ENCODE measurements at regions of chr19 and their contacts with region 1.

Region 1: GRCh38 chr19:58305065-58305931 is at the start of gene ERVK3-1:
- DNase-seq: peak; percentile 93 to 97 (median 95)
- H3K4me3 ChIP-seq: peak within 1 kb of the TSS; percentile 54 to 83
- H3K4me3 Mint-ChIP-seq: peak within 1 kb of the TSS; percentile 97 to 100 (median 100)
- H3K27ac ChIP-seq: peak within 1 kb of the TSS; percentile 95
- H3K27ac Mint-ChIP-seq: peak within 1 kb of the TSS; percentile 97 to 100 (median 99)
- H3K4me1 ChIP-seq: peaks cover 31% of the 10 kb centered on the region
- H3K4me1 Mint-ChIP-seq: peaks cover 34 to 59% (median 45%) of the 10 kb centered on the region in 4 donors
- H3K27me3 ChIP-seq: no peaks in the 10 kb centered on the region
- H3K27me3 Mint-ChIP-seq: no peaks in the 10 kb centered on the region
- total RNA-seq, gene ERVK3-1: 72.3 to 76.6 TPM

Region 2: DNA sequence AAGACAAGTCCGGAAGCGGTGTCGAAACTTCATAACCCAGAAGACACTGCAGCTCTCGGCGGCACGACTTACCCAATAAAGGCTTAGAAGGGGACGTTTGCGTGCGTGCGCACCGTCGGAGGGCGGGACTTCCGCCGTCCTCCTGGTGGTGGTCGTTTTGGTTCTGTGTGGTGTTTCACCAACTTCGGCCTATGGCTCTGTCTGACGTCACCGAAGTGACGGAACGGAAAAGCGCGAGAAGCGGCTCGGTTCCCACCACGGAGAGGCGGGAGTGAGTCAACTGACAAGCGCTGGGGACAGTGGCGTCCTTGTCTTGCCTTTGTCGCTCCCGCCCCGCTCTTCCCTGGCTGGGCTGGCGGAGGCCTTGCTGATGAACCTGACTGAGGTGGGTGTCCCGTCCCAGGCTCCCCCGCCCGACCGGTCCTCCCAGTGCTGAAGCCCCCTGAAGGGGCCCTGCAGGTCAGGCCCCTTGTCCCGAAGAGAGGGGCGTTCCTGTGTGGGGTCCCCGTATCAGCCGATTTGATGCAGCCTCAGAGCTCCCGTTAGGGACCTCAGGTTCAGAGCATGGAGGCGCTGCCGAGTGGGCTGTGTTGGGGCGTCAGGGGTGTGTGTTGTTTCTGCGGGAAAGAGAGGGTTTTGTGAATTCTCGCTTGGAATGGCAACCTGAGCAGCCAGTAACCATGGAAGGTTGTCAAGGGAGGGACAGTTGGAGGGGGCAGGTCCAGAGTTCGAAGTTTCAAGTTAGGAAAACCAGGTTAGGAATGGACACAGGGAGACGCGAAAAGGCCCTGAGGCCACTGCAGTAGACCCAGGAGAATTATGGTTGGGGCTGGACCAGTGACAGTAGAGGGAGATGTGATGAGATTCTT is 915.3 kb before region 1 on chr19 and contains the start of gene ZNF548:
- CTCF ChIA-PET with region 1: no interaction called
- POLR2A ChIA-PET with region 1: no interaction called
- intact Hi-C with region 1: loop called (anchors 1 kb)
- DNase-seq: peak; percentile 93 to 100 (median 95)
- H3K4me3 ChIP-seq: peak within 1 kb of the TSS; percentile 52 to 62
- H3K4me3 Mint-ChIP-seq: peak within 1 kb of the TSS; percentile 97 to 99 (median 98)
- H3K27ac ChIP-seq: peak within 1 kb of the TSS; percentile 95
- H3K27ac Mint-ChIP-seq: peak within 1 kb of the TSS; percentile 98 to 100 (median 99)
- H3K4me1 ChIP-seq: peaks cover 22% of the 10 kb centered on the region
- H3K4me1 Mint-ChIP-seq: peaks cover 22 to 41% (median 31%) of the 10 kb centered on the region in 4 donors
- H3K27me3 ChIP-seq: no peaks in the 10 kb centered on the region
- H3K27me3 Mint-ChIP-seq: peaks cover 0 to 3% of the 10 kb centered on the region in 2 donors
- total RNA-seq, gene ZNF548: 85.4 to 103 TPM

Region 3: DNA sequence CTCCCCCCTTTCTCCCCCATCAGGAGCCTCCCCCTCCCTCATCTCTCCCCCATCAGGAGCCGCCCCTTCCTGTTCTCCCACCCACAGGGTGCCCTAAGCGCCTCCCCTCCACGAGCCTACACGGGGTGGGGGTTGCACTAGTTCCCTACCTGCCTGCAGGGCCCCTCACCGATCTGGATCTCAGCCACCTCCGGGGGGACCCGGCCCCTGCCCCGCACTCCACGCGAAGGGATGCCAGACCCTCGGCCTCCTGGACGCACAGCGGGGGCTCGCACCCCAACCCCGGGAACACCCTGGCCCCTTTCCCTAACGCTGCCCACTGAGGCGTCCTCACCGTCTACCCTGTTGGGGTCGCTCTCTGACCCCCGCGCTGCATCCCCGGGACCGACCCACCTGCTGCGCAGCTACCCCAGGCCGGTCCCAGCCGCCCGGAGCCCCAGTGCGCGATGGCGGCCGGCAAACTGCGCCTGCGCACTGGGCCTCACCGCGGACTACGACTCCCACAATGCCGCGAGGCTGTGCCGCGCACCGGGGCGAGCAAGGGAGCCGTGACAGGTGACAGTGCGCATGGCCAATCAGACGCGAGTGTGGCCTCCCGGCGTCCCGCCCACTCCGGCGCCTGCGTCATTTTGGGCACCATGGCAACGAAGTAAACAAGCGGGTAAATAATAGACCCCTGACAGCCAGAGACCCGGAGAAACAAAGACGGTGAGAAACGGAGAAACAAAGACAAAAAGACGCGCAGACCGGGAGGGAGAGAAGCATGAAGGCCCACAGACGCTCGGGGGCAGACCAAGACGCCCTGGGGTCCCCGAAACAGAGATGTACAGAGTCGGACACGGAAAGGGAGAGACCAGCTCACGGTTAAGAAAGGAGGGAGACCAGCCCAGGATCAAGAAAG is 207.3 kb before region 1 on chr19 and contains the start of gene ZSCAN18:
- CTCF ChIA-PET with region 1: no interaction called
- POLR2A ChIA-PET with region 1: no interaction called
- intact Hi-C with region 1: no loop called
- DNase-seq: peak; percentile 98 to 99 (median 99)
- H3K4me3 ChIP-seq: peak within 1 kb of the TSS; percentile 61 to 69
- H3K4me3 Mint-ChIP-seq: peak within 1 kb of the TSS; percentile 88 to 97 (median 92)
- H3K27ac ChIP-seq: peak within 1 kb of the TSS; percentile 98
- H3K27ac Mint-ChIP-seq: peak within 1 kb of the TSS; percentile 100
- H3K4me1 ChIP-seq: peaks cover 5% of the 10 kb centered on the region
- H3K4me1 Mint-ChIP-seq: peaks cover 7 to 28% (median 14%) of the 10 kb centered on the region in 4 donors
- H3K27me3 ChIP-seq: no peaks in the 10 kb centered on the region
- H3K27me3 Mint-ChIP-seq: peaks cover 0 to 3% of the 10 kb centered on the region in 2 donors
- total RNA-seq, gene ZSCAN18: 63.2 to 69.1 TPM

Region 4: DNA sequence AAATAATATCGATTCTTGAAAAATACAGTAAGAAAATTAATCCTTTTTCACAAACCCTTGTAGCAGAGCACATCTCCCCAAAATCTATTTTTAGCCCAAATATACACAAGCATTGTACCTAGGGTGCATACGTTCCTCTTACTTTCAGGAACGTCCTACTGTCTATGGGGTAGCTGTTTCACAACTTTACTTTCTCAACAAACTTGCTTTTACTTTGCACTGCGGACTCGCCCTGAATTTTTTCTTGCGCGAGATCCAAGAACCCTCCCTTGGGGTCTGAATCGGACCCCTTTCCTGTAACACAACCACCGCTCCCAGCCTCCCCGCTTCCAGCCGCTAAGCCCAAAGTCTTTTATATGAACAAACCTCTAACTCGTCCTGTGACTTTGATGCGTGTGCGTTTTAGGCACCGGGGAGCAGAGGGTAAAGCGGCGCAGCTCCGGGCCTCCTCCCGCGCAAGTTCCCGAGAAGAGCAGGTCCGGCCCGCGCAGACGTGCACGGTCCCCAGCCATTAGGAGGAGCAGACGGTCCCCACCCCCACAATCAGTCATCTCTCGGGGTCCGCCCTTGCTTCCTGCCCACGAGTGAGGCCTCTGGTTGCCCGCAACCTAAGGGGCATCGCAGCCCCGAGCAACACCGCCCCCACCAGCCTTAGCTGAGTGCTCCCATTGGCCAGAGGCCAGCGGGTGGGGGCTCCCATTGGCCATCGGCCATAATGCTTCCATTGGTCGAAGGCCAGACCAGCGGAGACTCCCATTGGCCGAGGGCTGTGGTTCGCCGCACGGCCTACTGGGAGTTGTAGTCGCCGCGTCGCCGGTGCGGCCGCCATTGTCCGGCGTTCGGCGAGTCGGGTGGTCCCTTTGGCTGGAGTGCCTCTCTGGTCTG is 26.9 kb before region 1 on chr19 and contains the start of gene ZNF8:
- CTCF ChIA-PET with region 1: interaction called, 3 read pairs
- POLR2A ChIA-PET with region 1: interaction called, 10 read pairs
- intact Hi-C with region 1: loop called (anchors 1 kb)
- DNase-seq: peak; percentile 93 to 97 (median 95)
- H3K4me3 ChIP-seq: peak within 1 kb of the TSS; percentile 62 to 92
- H3K4me3 Mint-ChIP-seq: peak within 1 kb of the TSS; percentile 93 to 100 (median 98)
- H3K27ac ChIP-seq: peak within 1 kb of the TSS; percentile 73
- H3K27ac Mint-ChIP-seq: peak within 1 kb of the TSS; percentile 91 to 99 (median 96)
- H3K4me1 ChIP-seq: peaks cover 36% of the 10 kb centered on the region
- H3K4me1 Mint-ChIP-seq: peaks cover 28 to 57% (median 36%) of the 10 kb centered on the region in 4 donors
- H3K27me3 ChIP-seq: no peaks in the 10 kb centered on the region
- H3K27me3 Mint-ChIP-seq: no peaks in the 10 kb centered on the region
- total RNA-seq, gene ZNF8: 9.5 to 10.2 TPM

Region 5: DNA sequence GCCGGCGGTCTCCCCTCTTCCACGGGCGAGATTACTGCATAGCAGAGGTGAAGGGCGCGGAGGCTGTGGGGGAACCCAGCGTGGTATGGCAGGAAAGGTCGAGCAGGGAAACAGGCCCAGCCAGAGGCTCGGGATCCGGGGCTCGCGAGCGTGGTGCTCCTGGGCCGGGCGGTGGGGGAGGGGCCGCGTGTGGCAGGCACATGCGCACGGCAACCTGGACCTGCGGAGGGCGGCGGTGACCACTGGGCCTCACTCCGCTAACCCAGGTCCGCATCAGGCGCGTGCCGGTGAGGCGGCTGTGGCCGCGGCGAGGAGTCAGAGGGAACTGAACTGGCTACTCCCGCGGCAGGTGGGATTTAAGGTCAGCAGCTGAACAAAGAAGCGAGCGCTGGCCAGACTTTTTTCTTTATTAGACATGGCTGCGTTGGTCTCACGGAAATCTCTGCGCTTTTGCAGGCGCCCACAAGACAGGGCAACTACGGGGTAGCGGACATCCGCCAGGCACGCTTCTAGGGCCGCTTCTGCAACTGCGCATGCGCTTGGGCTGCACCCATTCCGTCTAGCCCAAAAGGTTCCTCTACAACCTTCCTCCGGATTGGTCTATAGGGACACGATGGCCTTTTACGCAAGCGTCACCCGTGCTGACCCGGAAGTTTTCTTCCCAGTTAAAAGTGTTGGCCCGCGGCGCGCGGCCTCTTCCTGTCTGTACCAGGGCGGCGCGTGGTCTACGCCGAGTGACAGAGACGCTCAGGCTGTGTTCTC is 81.5 kb after region 1 on chr19 and contains the start of gene RPS5:
- CTCF ChIA-PET with region 1: no interaction called
- POLR2A ChIA-PET with region 1: interaction called, 3 read pairs
- intact Hi-C with region 1: loop called (anchors 1 kb)
- DNase-seq: peak; percentile 94 to 99 (median 98)
- H3K4me3 ChIP-seq: peak within 1 kb of the TSS; percentile 56 to 65
- H3K4me3 Mint-ChIP-seq: peak within 1 kb of the TSS; percentile 93 to 99 (median 96)
- H3K27ac ChIP-seq: peak within 1 kb of the TSS; percentile 89
- H3K27ac Mint-ChIP-seq: peak within 1 kb of the TSS; percentile 96 to 99 (median 98)
- H3K4me1 ChIP-seq: peaks cover 41% of the 10 kb centered on the region
- H3K4me1 Mint-ChIP-seq: peaks cover 27 to 60% (median 39%) of the 10 kb centered on the region in 4 donors
- H3K27me3 ChIP-seq: no peaks in the 10 kb centered on the region
- H3K27me3 Mint-ChIP-seq: no peaks in the 10 kb centered on the region
- total RNA-seq, gene RPS5: 1,267 to 1,360 TPM

Region 6: DNA sequence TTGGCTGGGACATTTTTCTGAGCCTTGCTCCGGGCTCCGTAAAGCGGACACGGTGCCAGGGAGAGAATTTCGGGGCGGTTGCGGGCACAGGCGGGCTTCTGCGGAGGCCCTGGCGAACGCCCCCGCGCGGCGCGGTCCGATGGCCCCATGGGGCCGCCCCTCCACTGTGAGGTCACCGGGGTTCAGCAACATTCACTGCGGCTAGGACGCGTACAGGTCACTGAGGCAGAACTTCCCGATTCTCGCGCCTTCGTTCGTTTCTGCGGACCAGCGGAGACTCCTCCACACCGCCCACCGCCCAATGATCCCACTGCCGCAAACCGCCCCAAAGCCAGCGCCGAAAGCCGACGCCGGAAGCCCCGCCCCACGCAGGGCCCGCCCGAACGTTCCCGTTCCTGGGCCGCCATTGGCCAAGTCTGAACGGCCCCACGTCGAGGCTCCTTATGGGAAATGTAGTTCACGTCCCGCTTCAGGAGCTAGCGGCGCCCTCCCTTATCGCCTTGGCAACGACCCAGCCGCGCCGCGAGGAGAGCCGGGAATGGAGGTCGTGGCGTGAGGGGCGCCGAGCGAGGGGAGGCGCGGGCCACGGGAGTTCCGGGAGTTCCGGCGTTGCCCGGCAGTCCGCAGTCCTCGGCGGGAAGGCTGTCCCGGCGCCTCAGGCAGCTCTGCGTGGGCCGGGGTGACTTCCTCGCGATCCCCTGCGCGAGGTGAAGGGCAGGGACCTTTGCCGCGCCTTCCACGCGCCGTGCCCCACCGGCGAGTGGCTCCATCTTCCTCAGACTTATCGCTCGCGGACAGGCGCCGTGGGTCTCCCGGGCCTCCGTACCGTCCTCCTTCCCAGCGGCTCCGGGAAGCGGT is 103.1 kb after region 1 on chr19 and contains the start of gene ZNF584:
- CTCF ChIA-PET with region 1: interaction called, 3 read pairs
- POLR2A ChIA-PET with region 1: interaction called, 5 read pairs
- intact Hi-C with region 1: loop called (anchors 1 kb)
- DNase-seq: peak; percentile 93 to 94 (median 93)
- H3K4me3 ChIP-seq: peak within 1 kb of the TSS; percentile 71 to 94
- H3K4me3 Mint-ChIP-seq: peak within 1 kb of the TSS; percentile 92 to 100 (median 96)
- H3K27ac ChIP-seq: peak within 1 kb of the TSS; percentile 77
- H3K27ac Mint-ChIP-seq: peak within 1 kb of the TSS; percentile 91 to 98 (median 95)
- H3K4me1 ChIP-seq: peaks cover 25% of the 10 kb centered on the region
- H3K4me1 Mint-ChIP-seq: peaks cover 21 to 39% (median 33%) of the 10 kb centered on the region in 4 donors
- H3K27me3 ChIP-seq: no peaks in the 10 kb centered on the region
- H3K27me3 Mint-ChIP-seq: no peaks in the 10 kb centered on the region
- total RNA-seq, gene ZNF584: 10.3 to 10.7 TPM